ENCODE measurements at regions of chr4 and their contacts with region 1.

Region 1: GRCh38 chr4:53196882-53197771 is 168.7 kb downstream of the SCFD2 start:
- DNase-seq: no peak
- ATAC-seq: peak in 2 of 4 donors; percentile 45 to 67
- H3K4me3 ChIP-seq: no peak overlapping the region
- H3K27ac ChIP-seq: no peak overlapping the region
- H3K4me1 ChIP-seq: peaks cover 4% of the 10 kb centered on the region
- H3K27me3 ChIP-seq: no peaks in the 10 kb centered on the region
- CTCF ChIP-seq: peak; percentile 76

Region 2: GRCh38 chr4:53015681-53016080 is 181.4 kb before region 1 on chr4:
- intact Hi-C with region 1: loop called in 1 of 2 experiments (anchors 5 kb)
- DNase-seq: no peak
- ATAC-seq: peak in 2 of 4 donors; percentile 42
- H3K4me3 ChIP-seq: no peak overlapping the region
- H3K27ac ChIP-seq: no peak overlapping the region
- H3K4me1 ChIP-seq: peaks cover 26% of the 10 kb centered on the region
- H3K27me3 ChIP-seq: no peaks in the 10 kb centered on the region
- CTCF ChIP-seq: peak; percentile 70

Region 3: GRCh38 chr4:53377319-53378170 is 180.4 kb after region 1 on chr4 and contains the start of gene FIP1L1:
- intact Hi-C with region 1: loop called in 1 of 2 experiments (anchors 10 kb)
- DNase-seq: peak; percentile 93 to 97
- ATAC-seq: peak; percentile 99 to 100 (median 100)
- H3K4me3 ChIP-seq: peak within 1 kb of the TSS; percentile 90
- H3K27ac ChIP-seq: peak within 1 kb of the TSS; percentile 83
- H3K4me1 ChIP-seq: peaks cover 9% of the 10 kb centered on the region
- H3K27me3 ChIP-seq: no peaks in the 10 kb centered on the region
- CTCF ChIP-seq: no peak
- total RNA-seq, gene FIP1L1: 27.0 to 30.3 (median 27.6) TPM

Region 4: GRCh38 chr4:53431052-53431451 is 233.9 kb after region 1 on chr4:
- intact Hi-C with region 1: no loop called
- DNase-seq: no peak
- ATAC-seq: no peak
- H3K4me3 ChIP-seq: no peak overlapping the region
- H3K27ac ChIP-seq: no peak overlapping the region
- H3K4me1 ChIP-seq: no peaks in the 10 kb centered on the region
- H3K27me3 ChIP-seq: no peaks in the 10 kb centered on the region
- CTCF ChIP-seq: no peak

Region 5: DNA sequence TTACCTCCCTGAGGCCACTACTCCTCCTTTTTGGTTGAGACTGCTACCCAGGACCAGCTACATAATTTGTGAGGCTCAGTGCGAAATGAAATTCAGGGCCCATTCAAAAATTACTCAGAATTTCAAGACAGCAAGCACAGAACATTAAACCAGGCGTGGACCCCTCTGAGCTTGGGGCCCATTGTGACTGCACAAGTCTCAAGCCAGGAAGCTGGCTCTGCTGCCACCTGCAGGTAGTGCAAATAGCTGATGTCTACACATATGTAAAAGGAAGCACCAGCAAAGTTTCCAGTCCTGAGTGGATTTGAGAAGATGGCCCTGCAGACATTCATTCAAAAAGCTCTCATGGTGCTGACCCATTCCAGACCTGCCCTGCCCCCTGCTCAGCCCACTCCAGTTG is 607.6 kb after region 1 on chr4:
- intact Hi-C with region 1: loop called in 1 of 2 experiments (anchors 10 kb)
- DNase-seq: peak in 1 of 2 donors; percentile 17
- ATAC-seq: peak in 2 of 4 donors; percentile 32 to 54
- H3K4me3 ChIP-seq: no peak overlapping the region
- H3K27ac ChIP-seq: no peak overlapping the region
- H3K4me1 ChIP-seq: no peaks in the 10 kb centered on the region
- H3K27me3 ChIP-seq: no peaks in the 10 kb centered on the region
- CTCF ChIP-seq: peak; percentile 41

Region 6: DNA sequence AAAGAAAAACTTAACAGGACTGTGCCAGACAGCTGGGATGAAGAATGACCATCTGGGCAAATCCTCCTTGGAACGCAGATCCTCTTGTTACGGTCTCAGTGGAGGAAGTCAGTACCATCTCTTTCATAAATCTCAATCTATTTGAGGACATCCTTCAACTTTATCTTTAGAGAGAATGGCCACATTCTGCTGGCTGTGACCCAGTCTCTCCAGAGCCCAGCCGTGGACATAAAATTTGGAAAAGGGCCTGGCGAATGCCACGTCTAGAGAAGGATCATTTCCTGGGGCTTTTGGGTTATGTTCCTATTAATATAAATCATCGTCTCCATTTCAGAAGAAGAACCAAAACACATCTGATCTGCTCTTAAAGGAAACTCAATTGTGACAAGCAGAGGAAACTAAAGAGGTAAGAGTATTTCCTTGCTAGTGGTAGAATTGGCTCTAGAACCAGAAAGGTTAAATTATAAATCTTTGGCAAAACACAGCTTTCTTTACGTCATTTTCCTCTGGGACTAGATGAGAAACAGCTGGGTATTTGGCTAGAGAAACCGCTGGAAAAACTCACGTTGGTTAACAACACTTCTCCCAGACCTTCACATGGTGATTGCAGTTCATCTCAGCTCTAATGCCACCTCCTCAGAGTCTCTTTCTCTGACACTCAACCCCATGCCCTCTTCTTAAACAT is 702.6 kb after region 1 on chr4:
- intact Hi-C with region 1: loop called in 1 of 2 experiments (anchors 5 kb)
- DNase-seq: no peak
- ATAC-seq: peak in 1 of 4 donors; percentile 50
- H3K4me3 ChIP-seq: no peak overlapping the region
- H3K27ac ChIP-seq: no peak overlapping the region
- H3K4me1 ChIP-seq: no peaks in the 10 kb centered on the region
- H3K27me3 ChIP-seq: peaks cover 0 to 5% (median 0%) of the 10 kb centered on the region in 3 donors
- CTCF ChIP-seq: no peak

Region 7: DNA sequence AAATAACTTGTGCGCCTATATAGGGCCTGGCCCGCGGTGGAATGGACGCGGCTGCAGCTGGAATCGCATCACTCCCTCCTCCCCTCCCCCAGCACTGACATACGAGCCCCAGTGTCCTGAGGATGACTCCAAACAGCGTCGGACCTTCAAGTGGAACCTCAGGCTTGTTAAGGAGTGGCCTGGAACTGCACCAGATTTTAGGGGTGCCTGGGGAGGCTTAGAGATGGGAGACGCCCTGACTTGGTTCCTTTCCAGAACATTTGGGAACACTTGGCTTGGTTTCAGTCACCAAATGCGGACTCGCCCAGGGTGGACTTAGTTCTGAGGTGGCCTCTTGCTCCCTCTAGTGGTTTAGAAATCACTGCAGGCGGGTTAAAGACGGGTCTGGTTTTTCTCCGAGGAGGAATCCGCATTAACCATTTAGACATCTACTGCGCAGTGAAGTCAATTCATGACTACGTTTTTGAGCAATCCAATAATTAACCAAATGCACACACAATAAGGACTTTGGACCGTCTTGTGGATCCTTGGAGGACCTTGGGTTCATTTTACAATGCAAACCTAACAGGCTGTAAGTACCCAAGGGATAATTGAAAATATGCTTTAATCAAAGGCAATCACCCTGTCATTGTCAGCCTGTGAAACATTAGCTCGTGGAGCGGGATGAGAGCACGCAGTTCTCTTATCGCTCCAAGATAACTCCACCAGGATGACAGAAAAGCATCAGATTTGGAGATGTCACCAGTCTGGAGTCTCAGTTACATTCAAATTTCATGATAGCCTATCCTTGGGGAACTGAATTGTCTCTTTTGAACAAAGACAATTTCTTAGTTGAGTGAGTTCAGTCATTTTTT is 1020.7 kb after region 1 on chr4:
- intact Hi-C with region 1: loop called in 1 of 2 experiments (anchors 5 kb)
- DNase-seq: peak; percentile 76 to 88
- ATAC-seq: peak; percentile 86 to 96 (median 94)
- H3K4me3 ChIP-seq: peak overlapping the region; percentile 61
- H3K27ac ChIP-seq: no peak overlapping the region
- H3K4me1 ChIP-seq: no peaks in the 10 kb centered on the region
- H3K27me3 ChIP-seq: peaks cover 0 to 9% (median 0%) of the 10 kb centered on the region in 3 donors
- CTCF ChIP-seq: peak; percentile 90

Region 8: DNA sequence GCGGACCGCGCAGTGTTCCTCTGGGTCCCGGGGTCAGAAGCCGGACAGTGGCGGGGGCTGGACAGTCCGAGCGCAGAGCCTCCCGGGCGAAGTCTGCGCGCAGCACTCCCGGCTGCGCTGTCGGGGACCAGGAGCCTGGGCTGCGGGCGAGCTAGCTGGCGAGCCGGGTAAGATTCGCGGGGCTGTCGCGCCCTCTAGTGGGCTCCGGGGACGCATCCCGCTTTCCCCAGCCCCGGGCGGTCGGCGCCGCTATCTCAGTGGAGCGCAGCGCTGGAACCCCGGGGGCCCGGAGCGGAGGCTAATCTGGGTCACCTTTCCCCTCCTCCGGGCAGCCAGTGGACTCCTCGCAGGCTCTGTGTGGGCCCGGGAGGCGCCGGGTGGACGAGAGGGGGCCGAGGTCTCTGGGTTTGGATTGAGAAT is 1036.2 kb after region 1 on chr4:
- intact Hi-C with region 1: loop called (anchors 5 to 10 kb)
- DNase-seq: peak; percentile 88 to 92
- ATAC-seq: peak; percentile 91 to 94 (median 94)
- H3K4me3 ChIP-seq: peak overlapping the region; percentile 70
- H3K27ac ChIP-seq: no peak overlapping the region
- H3K4me1 ChIP-seq: peaks cover 28% of the 10 kb centered on the region
- H3K27me3 ChIP-seq: peaks cover 0 to 47% (median 27%) of the 10 kb centered on the region in 3 donors
- CTCF ChIP-seq: peak; percentile 82